H1 (cell line): ENCODE measurements at regions of chr17 and their contacts with region 1.

Region 1: DNA sequence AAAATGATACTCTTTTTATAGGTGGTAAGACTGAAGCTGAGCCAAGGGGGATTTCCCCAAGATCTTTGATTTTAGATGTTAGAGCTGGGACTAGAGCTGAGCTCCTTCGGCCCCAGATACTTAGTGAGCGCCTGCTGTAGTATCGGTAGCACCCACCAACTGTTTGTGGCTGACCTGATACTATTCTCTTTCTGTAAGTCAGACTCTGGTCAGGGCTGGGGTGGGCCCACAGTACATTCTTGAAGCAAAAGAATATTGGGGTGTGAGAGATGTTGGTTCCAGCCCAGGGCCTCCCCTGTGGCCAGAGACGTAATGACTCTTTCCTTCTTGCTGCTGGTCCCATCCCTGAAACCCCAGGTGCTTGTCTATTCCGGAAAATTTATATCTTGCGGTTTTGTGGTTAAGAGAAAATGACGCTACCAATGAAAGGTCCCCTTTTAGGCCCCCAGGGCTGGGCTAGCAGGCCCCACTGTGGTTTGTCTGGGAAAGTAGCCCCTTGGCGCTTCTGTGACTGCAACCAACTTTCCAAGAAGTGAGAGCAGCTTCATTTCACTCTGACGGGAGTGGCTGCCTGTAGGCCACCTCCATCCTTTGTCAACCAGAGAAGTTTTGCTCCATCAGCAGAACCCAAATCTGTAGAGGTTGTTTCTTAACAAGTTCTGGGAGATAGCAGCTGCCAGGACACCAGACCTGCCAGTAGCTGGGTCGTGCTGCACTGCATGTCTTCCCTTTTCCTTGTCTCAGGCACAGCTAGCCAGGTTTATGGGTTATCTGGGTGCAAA is 86.4 kb upstream of the LGALS9 start:
- DNase-seq: no peak
- H3K4me3 ChIP-seq: no peak overlapping the region
- H3K27ac ChIP-seq: no peak overlapping the region
- H3K4me1 ChIP-seq: peaks cover 0 to 4% (median 2%) of the 10 kb centered on the region in 4 experiments; a peak in 5 of 7 replicates
- H3K27me3 ChIP-seq: no peaks in the 10 kb centered on the region
- CTCF ChIP-seq: no peak
- EP300 ChIP-seq: no peak
- POLR2A ChIP-seq: no peak
- RAD21 ChIP-seq: no peak

Region 2: DNA sequence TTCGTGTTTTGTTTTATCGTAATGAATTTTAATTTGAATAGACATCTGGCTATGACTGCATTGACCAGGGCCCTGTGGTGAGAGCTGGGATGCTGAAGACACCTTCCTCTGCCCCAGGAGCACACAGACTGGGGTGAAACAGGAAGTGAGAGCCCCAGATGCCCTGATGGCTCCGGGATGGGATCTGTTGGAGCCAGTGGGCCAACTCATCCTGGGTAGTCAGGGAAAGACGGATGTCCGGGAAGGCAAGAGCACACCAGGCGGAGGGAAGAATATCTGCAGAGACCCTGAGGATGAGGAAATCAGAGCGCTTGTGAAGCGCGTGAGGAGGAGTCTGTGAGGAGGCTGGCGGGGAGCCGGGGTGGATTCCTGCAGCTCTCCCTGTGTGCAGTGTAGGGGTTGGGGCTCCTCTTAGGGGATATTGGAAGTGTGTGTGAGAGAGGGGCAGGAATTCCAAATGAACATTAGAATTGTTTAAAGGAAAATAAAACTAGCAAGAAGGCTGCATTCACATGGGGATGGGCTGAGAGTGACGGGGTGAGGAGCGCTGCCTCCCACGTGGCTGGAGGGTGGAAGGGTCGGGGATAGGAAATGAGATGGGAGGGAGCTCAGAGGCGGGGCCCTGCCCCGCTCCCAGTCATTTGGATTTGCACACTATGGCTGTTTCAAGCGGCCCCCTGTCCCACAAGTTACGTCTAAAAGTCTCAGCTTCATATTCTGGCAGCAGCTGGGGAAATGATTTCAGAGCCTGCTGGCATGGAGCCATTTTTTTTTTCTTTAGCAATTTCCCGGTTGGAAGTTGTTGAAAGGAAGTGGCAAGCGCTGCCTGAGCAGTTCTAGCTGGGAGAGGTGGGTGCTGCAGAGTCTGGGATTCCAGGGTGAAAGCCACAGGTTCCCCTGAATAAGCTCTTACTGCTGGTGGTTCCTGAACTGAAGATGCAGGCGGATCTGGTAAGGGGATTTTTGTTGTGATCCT is 15.3 kb after region 1 on chr17:
- CTCF ChIA-PET with region 1: interaction called, 16 read pairs
- POLR2A ChIA-PET with region 1: interaction called, 5 read pairs
- DNase-seq: no peak
- H3K4me3 ChIP-seq: no peak overlapping the region
- H3K27ac ChIP-seq: no peak overlapping the region; the same call in 1 of the 2 replicates
- H3K4me1 ChIP-seq: peaks cover 0 to 11% (median 2%) of the 10 kb centered on the region in 4 experiments; a peak in 4 of 7 replicates
- H3K27me3 ChIP-seq: no peaks in the 10 kb centered on the region
- CTCF ChIP-seq: no peak
- EP300 ChIP-seq: no peak
- POLR2A ChIP-seq: no peak
- RAD21 ChIP-seq: 0 out of 4 replicates have a peak, but pooled peaks of 1 of the 2 experiments have one; percentile 8